Prostate gland (tissue), 2 donors: ENCODE measurements at regions of chr9 and their contacts with region 1.

Region 1: GRCh38 chr9:89318123-89319014 is at the start of gene SECISBP2:
- DNase-seq: peak; percentile 95
- H3K4me3 ChIP-seq: peak within 1 kb of the TSS; percentile 86 to 92
- H3K27ac ChIP-seq: peak within 1 kb of the TSS; percentile 100
- H3K4me1 ChIP-seq: no peaks in the 10 kb centered on the region
- H3K27me3 ChIP-seq: no peaks in the 10 kb centered on the region
- CTCF ChIP-seq: peak in 3 of 4 experiments; percentile 74 to 83 (median 74)
- POLR2A ChIP-seq: peak; percentile 90
- total RNA-seq, gene SECISBP2: 43.1 to 76.2 TPM

Region 2: GRCh38 chr9:89497978-89498851 is 179.8 kb after region 1 on chr9 and contains the start of gene SEMA4D:
- intact Hi-C with region 1: no loop called
- DNase-seq: peak; percentile 86
- H3K4me3 ChIP-seq: peak within 1 kb of the TSS; percentile 89 to 90
- H3K27ac ChIP-seq: peak within 1 kb of the TSS; percentile 66 to 78
- H3K4me1 ChIP-seq: peaks cover 7% of the 10 kb centered on the region
- H3K27me3 ChIP-seq: no peaks in the 10 kb centered on the region
- CTCF ChIP-seq: no peak
- POLR2A ChIP-seq: no peak
- total RNA-seq, gene SEMA4D: 17.1 to 52.7 TPM

Region 3: GRCh38 chr9:89549031-89549644 is 230.8 kb after region 1 on chr9:
- intact Hi-C with region 1: loop called (anchors 2 kb)
- DNase-seq: peak; percentile 75
- H3K4me3 ChIP-seq: no peak overlapping the region
- H3K27ac ChIP-seq: no peak overlapping the region
- H3K4me1 ChIP-seq: no peaks in the 10 kb centered on the region
- H3K27me3 ChIP-seq: no peaks in the 10 kb centered on the region
- CTCF ChIP-seq: peak; percentile 85 to 97 (median 90)
- POLR2A ChIP-seq: no peak